ENCODE measurements at regions of chr1 and their contacts with region 1.

Region 1: DNA sequence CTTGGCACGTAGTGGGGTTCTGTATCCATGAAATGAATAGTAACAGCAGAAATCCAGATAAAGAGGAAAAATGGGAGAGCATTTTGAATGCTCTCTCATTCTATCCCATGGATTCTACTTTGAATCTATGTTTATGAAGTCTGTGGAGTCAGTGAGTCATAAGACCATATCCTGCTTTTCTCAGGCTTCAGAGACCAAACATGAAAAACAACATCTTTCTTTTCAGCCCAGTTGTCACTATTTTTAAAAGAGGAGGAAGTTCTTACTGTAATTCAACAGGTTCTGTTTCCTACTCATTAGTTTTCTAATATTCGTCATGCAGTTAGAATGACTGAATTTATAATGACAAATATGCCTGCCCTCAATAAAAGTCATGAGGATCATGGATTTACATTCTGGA is 39.4 kb upstream of the CD55 start:
- DNase-seq: peak; percentile 96
- H3K4me3 ChIP-seq: peak overlapping the region in 1 of 3 experiments; percentile 36
- H3K27ac ChIP-seq: peak overlapping the region; percentile 97
- H3K4me1 ChIP-seq: peaks cover 44% of the 10 kb centered on the region
- H3K27me3 ChIP-seq: no peaks in the 10 kb centered on the region
- CTCF ChIP-seq: no peak
- POLR2A ChIP-seq: no peak

Region 2: GRCh38 chr1:207240325-207241095 is 41.5 kb before region 1 on chr1:
- CTCF ChIA-PET with region 1: no interaction called
- POLR2A ChIA-PET with region 1: no interaction called
- dilution Hi-C with region 1: no loop called
- intact Hi-C with region 1: loop called (anchors 1 kb)
- DNase-seq: peak; percentile 59
- H3K4me3 ChIP-seq: no peak overlapping the region
- H3K27ac ChIP-seq: no peak overlapping the region
- H3K4me1 ChIP-seq: peaks cover 18% of the 10 kb centered on the region
- H3K27me3 ChIP-seq: no peaks in the 10 kb centered on the region
- CTCF ChIP-seq: no peak
- POLR2A ChIP-seq: no peak

Region 3: DNA sequence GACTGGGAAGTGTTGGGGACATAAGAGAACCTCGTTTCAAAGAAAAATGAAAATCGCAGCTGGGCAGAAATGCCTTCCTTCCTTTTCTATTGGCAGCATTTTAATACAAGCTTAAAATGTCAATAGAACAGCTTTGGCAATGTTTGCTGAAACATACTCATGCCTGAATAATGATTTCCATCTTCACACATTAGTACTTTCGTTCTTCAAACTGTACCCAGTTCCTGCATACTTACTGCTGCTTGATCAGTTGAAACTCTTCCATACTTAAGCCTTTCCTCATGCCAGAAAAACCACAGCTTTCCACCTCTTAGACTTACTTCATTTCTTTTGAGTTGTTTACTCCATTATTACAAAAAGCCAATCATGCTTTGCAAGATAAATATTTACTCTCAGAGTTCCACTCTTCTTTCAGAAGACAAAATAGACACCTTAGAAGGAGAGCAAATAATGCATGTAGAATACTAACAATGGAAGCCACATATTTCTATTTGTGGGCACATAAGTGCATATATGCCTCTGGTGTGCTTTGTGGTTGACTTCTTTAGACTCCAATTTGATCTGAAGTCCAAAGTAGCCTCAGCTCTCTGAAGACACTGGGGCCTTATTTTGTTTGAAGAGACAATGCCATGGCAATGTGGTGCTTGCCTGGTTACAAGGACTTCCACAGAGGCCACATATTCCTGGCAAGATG is 16.7 kb after region 1 on chr1:
- CTCF ChIA-PET with region 1: interaction called, 9 read pairs
- POLR2A ChIA-PET with region 1: no interaction called
- dilution Hi-C with region 1: no loop called
- intact Hi-C with region 1: loop called (anchors 1 kb)
- DNase-seq: peak; percentile 66
- H3K4me3 ChIP-seq: no peak overlapping the region
- H3K27ac ChIP-seq: no peak overlapping the region
- H3K4me1 ChIP-seq: peaks cover 18% of the 10 kb centered on the region
- H3K27me3 ChIP-seq: no peaks in the 10 kb centered on the region
- CTCF ChIP-seq: no peak
- POLR2A ChIP-seq: no peak

Region 4: DNA sequence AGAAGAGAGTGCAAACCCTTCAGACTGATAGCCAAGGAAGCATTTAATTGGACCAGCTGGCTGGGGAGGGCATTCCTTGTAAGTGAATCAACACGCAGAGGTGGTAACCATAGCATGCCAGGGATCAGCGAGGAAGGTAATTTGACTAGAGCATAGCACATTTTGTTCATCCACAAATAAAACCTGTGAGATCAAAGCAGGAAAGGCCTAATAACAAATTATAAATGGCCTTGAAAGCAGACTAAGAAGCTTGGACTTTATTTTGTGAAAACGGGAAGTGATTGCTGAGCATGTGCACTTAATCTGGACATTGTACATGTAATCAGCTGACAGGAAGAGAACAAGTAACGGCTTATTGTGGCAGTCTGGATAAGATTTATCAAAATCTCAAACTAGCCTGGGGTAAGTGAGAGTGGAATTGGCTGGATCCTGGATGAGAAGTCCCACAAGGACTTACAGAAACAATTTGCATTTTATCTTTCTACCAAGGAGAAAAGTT is 27.8 kb after region 1 on chr1:
- CTCF ChIA-PET with region 1: interaction called, 6 read pairs
- POLR2A ChIA-PET with region 1: interaction called, 3 read pairs
- dilution Hi-C with region 1: no loop called
- intact Hi-C with region 1: loop called (anchors 1 kb)
- DNase-seq: peak; percentile 89
- H3K4me3 ChIP-seq: peak overlapping the region in 1 of 3 experiments; percentile 23
- H3K27ac ChIP-seq: peak overlapping the region; percentile 69
- H3K4me1 ChIP-seq: peaks cover 37% of the 10 kb centered on the region
- H3K27me3 ChIP-seq: no peaks in the 10 kb centered on the region
- CTCF ChIP-seq: no peak
- POLR2A ChIP-seq: no peak

Region 5: DNA sequence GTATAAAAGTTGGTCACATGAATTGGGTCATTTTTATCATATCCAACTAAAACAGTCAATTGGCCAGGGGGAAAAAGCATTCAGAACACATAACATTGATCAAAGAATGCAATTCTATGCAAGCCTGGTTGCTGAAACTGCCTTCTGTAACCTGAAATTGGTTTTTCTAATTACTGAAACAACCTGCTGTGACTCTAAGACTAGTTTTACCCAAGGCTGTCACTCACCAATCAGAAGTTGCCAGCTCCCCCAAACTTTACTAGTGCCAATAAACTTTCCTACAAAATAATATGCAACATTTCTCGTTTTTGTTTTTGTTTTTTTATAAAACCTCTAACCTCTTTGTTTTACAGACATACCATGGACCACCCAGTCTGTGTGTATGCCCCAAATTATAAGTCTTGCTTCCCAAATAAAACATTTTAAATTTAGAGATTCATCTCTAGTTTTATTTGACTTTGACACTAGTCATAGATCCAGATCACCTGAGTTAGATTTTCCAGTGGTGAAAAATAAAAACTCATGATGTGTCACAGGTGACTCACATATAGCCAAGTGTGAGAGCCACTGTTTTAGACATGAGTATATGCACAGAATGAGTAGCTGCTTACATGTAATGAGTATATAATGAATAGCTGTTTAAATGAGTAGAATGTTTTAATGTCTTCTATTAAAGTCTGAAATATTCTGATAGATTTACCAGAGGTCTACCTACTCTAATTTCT is 107.8 kb after region 1 on chr1:
- CTCF ChIA-PET with region 1: no interaction called
- POLR2A ChIA-PET with region 1: no interaction called
- dilution Hi-C with region 1: no loop called
- intact Hi-C with region 1: loop called (anchors 2 kb)
- DNase-seq: peak; percentile 63
- H3K4me3 ChIP-seq: no peak overlapping the region
- H3K27ac ChIP-seq: peak overlapping the region; percentile 39
- H3K4me1 ChIP-seq: peaks cover 21% of the 10 kb centered on the region
- H3K27me3 ChIP-seq: no peaks in the 10 kb centered on the region
- CTCF ChIP-seq: no peak
- POLR2A ChIP-seq: no peak

Measured in endothelial cell of umbilical vein (primary cell).